ENCODE measurements at regions of chr22 and their contacts with region 1.

Region 1: DNA sequence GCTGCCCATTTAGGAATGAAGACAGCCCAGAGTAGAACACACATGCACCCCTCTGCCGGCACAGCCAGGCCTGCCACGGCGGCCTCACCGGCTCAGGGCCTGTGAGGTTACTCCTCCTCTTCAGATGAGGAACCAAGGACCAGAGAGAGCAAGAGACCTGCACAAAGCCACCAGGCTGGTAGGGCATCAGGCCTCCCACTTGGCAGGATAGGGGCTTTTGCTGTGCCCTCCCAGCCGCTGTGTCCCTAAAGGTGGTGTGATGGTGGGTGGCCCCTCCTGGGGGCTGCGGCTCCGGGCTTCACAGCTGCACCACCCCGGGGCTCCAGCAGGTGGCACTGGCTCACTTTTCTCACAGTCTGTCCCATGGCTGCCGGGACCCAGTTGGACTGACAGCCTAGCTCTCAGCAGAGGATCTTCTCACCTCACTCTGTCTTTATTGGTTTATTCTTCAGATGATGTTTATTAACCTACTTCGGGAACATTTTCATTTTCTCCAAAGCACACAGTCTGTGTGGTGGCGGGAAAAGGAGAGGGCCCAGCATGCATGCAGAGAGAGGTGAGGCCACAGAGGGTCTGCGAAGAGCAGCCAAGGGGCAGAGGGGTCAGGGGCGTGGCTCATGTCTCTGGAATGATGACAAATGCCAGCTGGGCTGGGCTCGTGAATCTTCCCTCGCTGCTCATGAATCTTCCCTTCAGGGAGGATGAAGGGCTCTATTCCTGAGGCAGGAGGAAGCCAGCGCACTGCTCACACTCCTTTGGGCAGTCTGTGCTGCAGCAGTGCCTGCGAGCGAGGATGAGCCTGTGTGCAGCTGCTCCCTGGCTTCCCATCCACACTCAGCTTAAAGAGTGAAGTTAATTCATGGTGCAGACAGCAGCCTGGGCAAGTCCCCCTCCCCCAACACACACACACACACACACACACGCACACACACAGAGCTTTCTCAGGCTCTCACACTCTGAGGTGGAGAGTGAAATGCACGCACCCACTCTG is 101.1 kb upstream of the PITPNB start:
- DNase-seq: peak; percentile 54 to 68 (median 64)
- H3K4me3 ChIP-seq: no peak overlapping the region
- H3K27ac ChIP-seq: no peak overlapping the region
- H3K4me1 ChIP-seq: peaks cover 0 to 18% (median 17%) of the 10 kb centered on the region in 4 experiments
- H3K27me3 ChIP-seq: no peaks in the 10 kb centered on the region

Region 2: GRCh38 chr22:28051787-28052356 is 31.7 kb after region 1 on chr22:
- CTCF ChIA-PET with region 1: interaction called, 19 read pairs
- POLR2A ChIA-PET with region 1: no interaction called
- DNase-seq: peak; percentile 28 to 42 (median 35)
- H3K4me3 ChIP-seq: no peak overlapping the region
- H3K27ac ChIP-seq: no peak overlapping the region
- H3K4me1 ChIP-seq: peaks cover 0 to 16% (median 3%) of the 10 kb centered on the region in 4 experiments
- H3K27me3 ChIP-seq: no peaks in the 10 kb centered on the region

Region 3: GRCh38 chr22:28442264-28442710 is 422.1 kb after region 1 on chr22:
- CTCF ChIA-PET with region 1: interaction called, 21 read pairs
- POLR2A ChIA-PET with region 1: no interaction called
- DNase-seq: peak; percentile 81 to 92 (median 82)
- H3K4me3 ChIP-seq: peak overlapping the region; percentile 60 to 97 (median 78)
- H3K27ac ChIP-seq: peak overlapping the region in 1 of 2 experiments; percentile 43
- H3K4me1 ChIP-seq: peaks cover 7 to 30% (median 15%) of the 10 kb centered on the region in 4 experiments
- H3K27me3 ChIP-seq: no peaks in the 10 kb centered on the region

Region 4: GRCh38 chr22:28594797-28595462 is 574.8 kb after region 1 on chr22:
- CTCF ChIA-PET with region 1: interaction called, 78 read pairs
- POLR2A ChIA-PET with region 1: no interaction called
- DNase-seq: peak; percentile 65 to 80 (median 75)
- H3K4me3 ChIP-seq: no peak overlapping the region
- H3K27ac ChIP-seq: no peak overlapping the region
- H3K4me1 ChIP-seq: peaks cover 0 to 2% (median 0%) of the 10 kb centered on the region in 4 experiments
- H3K27me3 ChIP-seq: no peaks in the 10 kb centered on the region

Measured in common myeloid progenitor, CD34-positive (primary cell).